Panc1 (cell line): ENCODE measurements at regions of chr13 and their contacts with region 1.

Region 1: DNA sequence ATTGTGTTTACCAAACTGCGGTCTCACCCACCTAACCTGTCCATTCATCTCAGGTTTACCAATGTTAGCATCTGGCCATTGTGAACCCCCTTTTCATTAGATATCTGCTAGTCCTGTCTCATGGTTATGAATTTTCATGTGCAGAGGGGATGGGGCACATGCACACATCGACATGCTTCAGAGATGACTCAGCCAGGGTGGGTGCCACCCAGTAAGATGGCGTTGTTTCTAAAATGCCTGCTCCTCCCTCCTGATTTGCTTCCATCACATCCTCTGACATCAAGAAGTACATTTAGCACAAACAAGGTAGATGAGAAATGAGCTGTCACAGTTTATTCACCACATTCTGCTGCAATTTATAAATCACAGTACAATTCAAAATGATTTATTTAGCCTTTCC is 51.3 kb downstream of the GPALPP1 start:
- DNase-seq: no peak
- ATAC-seq: no peak
- H3K4me3 ChIP-seq: no peak overlapping the region
- H3K27ac ChIP-seq: no peak overlapping the region
- H3K4me1 ChIP-seq: no peaks in the 10 kb centered on the region
- H3K27me3 ChIP-seq: no peaks in the 10 kb centered on the region
- CTCF ChIP-seq: no peak

Region 2: DNA sequence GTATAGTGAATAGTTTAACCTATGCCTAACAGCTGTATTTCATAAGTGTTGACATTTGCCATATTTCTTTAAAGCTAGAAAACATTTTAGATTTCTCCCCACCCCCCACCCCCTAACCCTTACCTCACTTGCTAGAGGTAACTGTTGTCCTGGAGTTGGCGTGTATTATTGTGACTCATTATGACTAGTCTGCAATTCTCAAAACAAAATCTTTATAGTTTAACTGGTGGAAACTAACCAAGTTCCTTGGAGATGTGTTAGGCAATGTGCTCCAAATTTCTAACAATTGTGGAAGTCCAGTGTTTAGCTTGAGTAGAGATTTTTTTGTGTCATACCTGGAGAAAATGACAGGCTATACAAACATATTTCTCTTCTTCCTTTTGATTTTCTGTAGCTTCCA is 122.2 kb after region 1 on chr13:
- CTCF ChIA-PET with region 1: interaction called, 13 read pairs
- POLR2A ChIA-PET with region 1: no interaction called
- in situ Hi-C with region 1: no loop called
- intact Hi-C with region 1: no loop called
- DNase-seq: peak; percentile 53
- ATAC-seq: peak; percentile 98
- H3K4me3 ChIP-seq: no peak overlapping the region
- H3K27ac ChIP-seq: peak overlapping the region; percentile 93
- H3K4me1 ChIP-seq: peaks cover 23% of the 10 kb centered on the region
- H3K27me3 ChIP-seq: no peaks in the 10 kb centered on the region
- CTCF ChIP-seq: no peak

Region 3: GRCh38 chr13:45301243-45301642 is 260.6 kb after region 1 on chr13:
- CTCF ChIA-PET with region 1: no interaction called
- POLR2A ChIA-PET with region 1: no interaction called
- in situ Hi-C with region 1: no loop called
- intact Hi-C with region 1: loop called (anchors 5 kb)
- DNase-seq: no peak
- ATAC-seq: no peak
- H3K4me3 ChIP-seq: no peak overlapping the region
- H3K27ac ChIP-seq: no peak overlapping the region
- H3K4me1 ChIP-seq: no peaks in the 10 kb centered on the region
- H3K27me3 ChIP-seq: no peaks in the 10 kb centered on the region
- CTCF ChIP-seq: no peak